Natural killer cell (primary cell): ENCODE measurements at regions of chr11 and their contacts with region 1.

Region 1: GRCh38 chr11:78564490-78565467 is 9.9 kb downstream of the NARS2 start:
- DNase-seq: peak in 1 of 2 donors; percentile 81
- ATAC-seq: peak; percentile 76 to 82 (median 77)
- H3K4me3 ChIP-seq: no peak overlapping the region
- H3K4me3 Mint-ChIP-seq: no peak overlapping the region
- H3K27ac ChIP-seq: no peak overlapping the region
- H3K27ac Mint-ChIP-seq: peak overlapping the region in 1 of 2 donors; percentile 29
- H3K4me1 ChIP-seq: no peaks in the 10 kb centered on the region
- H3K4me1 Mint-ChIP-seq: peaks cover 6% of the 10 kb centered on the region in 2 donors
- H3K27me3 ChIP-seq: no peaks in the 10 kb centered on the region
- H3K27me3 Mint-ChIP-seq: no peaks in the 10 kb centered on the region
- CTCF ChIP-seq: peak; percentile 83

Region 2: GRCh38 chr11:78416305-78417178 is 148.2 kb before region 1 on chr11:
- intact Hi-C with region 1: loop called (anchors 1 kb)
- DNase-seq: peak; percentile 77 to 80
- ATAC-seq: peak; percentile 66 to 80 (median 75)
- H3K4me3 ChIP-seq: peak overlapping the region; percentile 56
- H3K4me3 Mint-ChIP-seq: peak overlapping the region; percentile 97
- H3K27ac ChIP-seq: peak overlapping the region; percentile 69
- H3K27ac Mint-ChIP-seq: peak overlapping the region; percentile 71 to 91
- H3K4me1 ChIP-seq: peaks cover 28% of the 10 kb centered on the region
- H3K4me1 Mint-ChIP-seq: peaks cover 25 to 28% of the 10 kb centered on the region in 2 donors
- H3K27me3 ChIP-seq: no peaks in the 10 kb centered on the region
- H3K27me3 Mint-ChIP-seq: peaks cover 20 to 31% of the 10 kb centered on the region in 2 donors
- CTCF ChIP-seq: peak; percentile 61